Activated CD4-positive, alpha-beta T cell treated with anti-CD3 and anti-CD28 coated beads, Interleukin-2, amount 10 ng/mL, durations not matched to agents 7 days and 5 days (primary cell): ENCODE measurements at regions of chr10 and their contacts with region 1.

Region 1: GRCh38 chr10:102713814-102714620 is at the start of gene ARL3:
- DNase-seq: peak; percentile 97
- H3K4me3 Mint-ChIP-seq: peak within 1 kb of the TSS; percentile 81
- H3K27ac Mint-ChIP-seq: peak within 1 kb of the TSS; percentile 82
- H3K4me1 Mint-ChIP-seq: peaks cover 56% of the 10 kb centered on the region
- H3K27me3 Mint-ChIP-seq: no peaks in the 10 kb centered on the region
- total RNA-seq, gene ARL3: 4.4 to 5.0 TPM

Region 2: DNA sequence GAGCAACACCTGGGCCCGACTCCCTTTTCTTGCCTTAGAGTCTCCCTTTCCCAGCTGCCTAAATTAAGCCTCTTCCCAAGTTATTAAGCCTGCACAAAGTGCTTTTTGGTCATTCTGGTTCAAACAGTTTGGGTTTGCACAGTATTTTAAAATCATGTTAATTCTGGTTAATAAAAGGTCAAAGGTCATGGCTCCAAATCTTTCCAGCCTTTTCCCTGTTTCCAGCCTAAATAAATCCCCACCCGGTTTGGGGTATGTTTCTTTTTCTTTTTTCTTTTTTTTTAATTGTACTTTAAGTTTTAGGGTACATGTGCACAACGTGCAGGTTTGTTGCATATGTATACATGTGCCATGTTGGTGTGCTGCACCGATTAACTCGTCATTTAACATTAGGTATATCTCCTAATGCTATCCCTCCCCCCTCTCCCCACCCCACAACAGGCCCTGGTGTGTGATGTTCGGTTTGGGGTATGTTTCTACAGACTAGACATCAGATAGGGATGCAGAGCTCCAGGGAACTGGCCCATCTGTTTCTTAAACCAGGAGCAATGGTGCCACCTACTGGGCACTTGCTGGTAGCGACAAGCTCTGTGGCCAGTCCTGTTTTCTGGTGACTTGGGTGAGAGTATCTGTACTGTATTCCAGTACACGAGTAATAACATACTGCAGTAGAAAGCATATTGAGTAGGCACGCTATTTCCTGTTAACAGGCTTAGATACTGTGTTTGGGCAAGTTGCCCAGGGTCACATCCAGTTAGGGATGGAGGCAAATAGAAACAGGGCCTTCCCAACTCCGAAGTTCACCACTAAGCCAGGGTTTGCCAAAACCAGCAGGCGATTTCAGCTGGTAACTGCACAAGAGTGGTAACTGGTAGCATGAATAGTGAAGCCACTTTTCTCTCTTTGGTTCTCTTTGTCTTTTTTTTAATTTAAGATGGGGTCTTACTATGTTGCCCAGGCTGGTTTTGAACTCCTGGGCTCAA is 130.3 kb before region 1 on chr10:
- CTCF ChIA-PET with region 1: no interaction called
- POLR2A ChIA-PET with region 1: no interaction called
- DNase-seq: peak; percentile 89
- H3K4me3 Mint-ChIP-seq: no peak overlapping the region
- H3K27ac Mint-ChIP-seq: no peak overlapping the region
- H3K4me1 Mint-ChIP-seq: peaks cover 14% of the 10 kb centered on the region
- H3K27me3 Mint-ChIP-seq: no peaks in the 10 kb centered on the region

Region 3: DNA sequence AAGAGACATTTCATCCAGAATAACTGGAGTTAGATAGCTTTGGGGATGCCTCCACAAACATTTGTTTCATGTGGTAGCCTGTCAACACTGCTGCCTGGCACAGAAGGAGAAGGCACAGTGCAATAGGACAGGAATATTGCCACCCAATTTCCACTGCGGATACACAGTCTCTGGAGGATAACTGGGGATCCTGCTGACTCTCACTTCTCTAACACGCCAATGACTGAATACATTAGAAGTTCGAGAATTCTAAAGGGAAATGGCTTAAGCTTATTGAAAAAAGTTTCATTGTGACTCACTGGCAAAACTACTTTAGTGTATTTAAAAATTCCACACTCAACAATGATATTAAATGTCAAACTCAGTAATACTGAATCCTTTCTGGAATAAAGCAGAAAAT is 12.7 kb before region 1 on chr10:
- CTCF ChIA-PET with region 1: interaction called, 14 read pairs
- POLR2A ChIA-PET with region 1: no interaction called
- DNase-seq: no peak
- H3K4me3 Mint-ChIP-seq: no peak overlapping the region
- H3K27ac Mint-ChIP-seq: no peak overlapping the region
- H3K4me1 Mint-ChIP-seq: peaks cover 2% of the 10 kb centered on the region
- H3K27me3 Mint-ChIP-seq: no peaks in the 10 kb centered on the region

Region 4: DNA sequence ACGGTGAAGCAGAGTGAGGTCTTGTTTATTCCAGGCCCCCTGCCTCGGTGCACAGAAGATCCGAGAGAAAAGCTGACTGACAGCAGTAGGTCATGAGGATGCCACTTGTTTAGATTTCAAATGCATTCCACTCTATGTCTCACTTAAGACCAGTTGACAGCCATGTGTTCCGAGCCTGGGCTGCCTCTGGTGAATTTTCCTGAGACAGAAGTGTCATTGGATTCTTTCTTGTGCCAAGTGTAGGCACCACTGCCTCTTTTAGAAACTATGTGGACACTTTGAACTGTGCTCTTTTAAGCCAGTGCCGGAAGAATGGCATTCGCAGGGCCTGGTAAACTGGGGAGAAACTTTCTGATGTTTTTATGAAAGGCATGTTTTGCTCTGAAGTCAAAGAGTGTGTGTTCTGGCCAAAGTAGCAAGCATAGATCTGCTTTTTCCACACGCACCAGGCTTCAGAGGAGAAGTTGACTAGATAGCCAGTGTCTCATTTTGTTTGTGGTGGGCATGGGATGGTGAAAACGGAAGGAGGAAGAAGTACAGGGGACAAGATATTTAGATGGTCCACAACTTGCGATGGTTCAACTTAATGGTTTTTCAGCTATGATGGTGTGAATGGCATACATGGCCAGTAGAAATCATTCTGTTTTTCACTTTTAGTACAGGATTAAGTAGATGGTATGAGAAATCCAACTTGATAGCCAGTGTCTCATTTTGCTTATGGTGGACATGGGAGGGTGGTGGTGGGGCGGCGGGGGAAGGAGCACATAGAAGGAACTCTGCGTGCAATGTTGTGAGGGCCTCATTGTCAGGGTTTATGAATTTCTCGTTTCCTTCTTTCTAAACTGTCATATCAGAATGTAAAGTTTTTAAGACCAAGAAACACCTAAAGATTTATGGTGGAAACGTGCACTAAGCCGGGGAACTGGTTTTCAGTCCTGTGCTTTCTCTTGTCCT is 81.7 kb after region 1 on chr10:
- CTCF ChIA-PET with region 1: no interaction called
- POLR2A ChIA-PET with region 1: no interaction called
- DNase-seq: no peak
- H3K4me3 Mint-ChIP-seq: peak overlapping the region; percentile 29
- H3K27ac Mint-ChIP-seq: peak overlapping the region; percentile 64
- H3K4me1 Mint-ChIP-seq: peaks cover 27% of the 10 kb centered on the region
- H3K27me3 Mint-ChIP-seq: no peaks in the 10 kb centered on the region